OCI-LY7 (cell line): ENCODE measurements at regions of chr7 and their contacts with region 1.

Region 1: GRCh38 chr7:144812379-144813283 is 23.2 kb downstream of the TPK1 start:
- DNase-seq: peak; percentile 68
- H3K4me3 ChIP-seq: peak overlapping the region; percentile 19
- H3K27ac ChIP-seq: peak overlapping the region; percentile 9
- H3K4me1 ChIP-seq: peaks cover 16% of the 10 kb centered on the region
- CTCF ChIP-seq: no peak

Region 2: DNA sequence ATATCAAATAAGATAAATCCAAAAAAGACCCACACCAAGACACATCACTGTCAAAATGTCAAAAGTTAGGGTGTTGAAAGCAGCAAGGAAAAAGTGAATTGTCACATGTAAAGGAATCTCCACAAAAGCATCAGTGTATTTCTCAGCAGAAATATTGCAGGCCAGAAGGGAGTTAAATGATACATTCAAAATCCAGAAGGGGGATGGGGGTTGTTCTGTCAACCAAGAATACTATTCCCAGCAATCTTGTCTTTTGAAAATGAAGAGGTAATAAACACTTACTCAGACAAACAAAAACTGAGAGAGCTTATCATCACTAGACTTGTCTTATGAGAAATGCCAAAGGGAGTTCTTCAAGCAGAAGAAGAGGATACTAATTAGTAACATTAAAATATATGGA is 218.1 kb before region 1 on chr7:
- CTCF ChIA-PET with region 1: no interaction called
- POLR2A ChIA-PET with region 1: no interaction called
- intact Hi-C with region 1: no loop called
- DNase-seq: no peak
- H3K4me3 ChIP-seq: no peak overlapping the region
- H3K27ac ChIP-seq: no peak overlapping the region
- H3K4me1 ChIP-seq: no peaks in the 10 kb centered on the region
- CTCF ChIP-seq: no peak

Region 3: GRCh38 chr7:144796919-144797318 is 15.7 kb before region 1 on chr7:
- CTCF ChIA-PET with region 1: no interaction called
- POLR2A ChIA-PET with region 1: interaction called, 21 read pairs
- intact Hi-C with region 1: no loop called
- DNase-seq: no peak
- H3K4me3 ChIP-seq: no peak overlapping the region
- H3K27ac ChIP-seq: no peak overlapping the region
- H3K4me1 ChIP-seq: peaks cover 8% of the 10 kb centered on the region
- CTCF ChIP-seq: no peak

Region 4: GRCh38 chr7:144827621-144828020 is 15.0 kb after region 1 on chr7:
- CTCF ChIA-PET with region 1: no interaction called
- POLR2A ChIA-PET with region 1: interaction called, 23 read pairs
- intact Hi-C with region 1: no loop called
- DNase-seq: no peak
- H3K4me3 ChIP-seq: peak overlapping the region; percentile 41
- H3K27ac ChIP-seq: peak overlapping the region; percentile 83
- H3K4me1 ChIP-seq: peaks cover 61% of the 10 kb centered on the region
- CTCF ChIP-seq: no peak